HEK293 (cell line): ENCODE measurements at regions of chr17 and their contacts with region 1.

Region 1: GRCh38 chr17:44086364-44087311 is 16.1 kb downstream of the G6PC3 start:
- H3K4me3 ChIP-seq: no peak overlapping the region
- H3K27ac ChIP-seq: peak overlapping the region; percentile 25; the same call in 1 of the 2 replicates
- H3K4me1 ChIP-seq: peaks cover 10% of the 10 kb centered on the region
- CTCF ChIP-seq: no peak

Region 2: GRCh38 chr17:44070455-44071197 is 16.0 kb before region 1 on chr17 and contains the start of gene G6PC3:
- CTCF ChIA-PET with region 1: interaction called, 20 read pairs
- POLR2A ChIA-PET with region 1: interaction called, 13 read pairs
- H3K4me3 ChIP-seq: peak within 1 kb of the TSS; percentile 50
- H3K27ac ChIP-seq: peak within 1 kb of the TSS; percentile 97
- H3K4me1 ChIP-seq: peaks cover 12% of the 10 kb centered on the region
- CTCF ChIP-seq: peak; percentile 6

Region 3: DNA sequence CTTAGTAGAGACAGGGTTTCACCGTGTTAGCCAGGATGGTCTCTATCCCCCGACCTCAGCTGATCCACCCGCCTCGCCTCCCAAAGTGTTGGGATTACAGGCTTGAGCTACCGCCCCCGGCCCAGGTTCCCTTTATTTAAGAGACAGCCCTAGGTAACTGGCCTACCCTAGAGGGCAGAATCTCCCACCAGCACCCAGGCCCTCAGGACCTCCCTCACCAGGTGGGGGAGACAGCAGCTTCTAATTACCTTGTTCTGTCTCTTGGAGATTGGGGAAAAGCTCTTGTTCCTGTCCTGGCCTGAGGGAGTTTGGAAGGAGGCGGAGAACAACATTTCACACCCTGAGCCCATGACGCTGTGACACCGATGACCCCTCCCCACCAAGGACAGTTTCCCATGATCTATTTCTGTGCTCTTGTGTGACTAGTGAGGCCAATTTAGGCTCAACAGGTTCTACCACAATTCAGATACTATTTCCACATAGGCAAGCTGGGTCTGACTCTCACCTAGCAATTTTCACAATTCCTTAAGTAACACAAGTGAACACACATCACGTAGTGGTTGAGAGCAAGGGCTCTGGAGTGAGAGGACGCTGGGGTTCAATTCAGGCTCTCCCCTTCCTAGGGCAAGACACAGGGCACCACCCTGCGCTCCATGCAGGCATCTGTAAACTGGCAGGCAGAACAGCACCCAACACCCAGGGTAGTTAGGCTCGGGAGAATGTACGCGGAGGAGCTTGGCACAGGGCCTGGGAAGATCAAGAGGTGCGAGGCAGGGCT is 16.4 kb after region 1 on chr17:
- CTCF ChIA-PET with region 1: interaction called, 12 read pairs
- POLR2A ChIA-PET with region 1: interaction called, 7 read pairs
- H3K4me3 ChIP-seq: no peak overlapping the region
- H3K27ac ChIP-seq: no peak overlapping the region
- H3K4me1 ChIP-seq: no peaks in the 10 kb centered on the region; the same call in 1 of the 2 replicates
- CTCF ChIP-seq: peak; percentile 50; the same call in 1 of the 2 replicates

Region 4: DNA sequence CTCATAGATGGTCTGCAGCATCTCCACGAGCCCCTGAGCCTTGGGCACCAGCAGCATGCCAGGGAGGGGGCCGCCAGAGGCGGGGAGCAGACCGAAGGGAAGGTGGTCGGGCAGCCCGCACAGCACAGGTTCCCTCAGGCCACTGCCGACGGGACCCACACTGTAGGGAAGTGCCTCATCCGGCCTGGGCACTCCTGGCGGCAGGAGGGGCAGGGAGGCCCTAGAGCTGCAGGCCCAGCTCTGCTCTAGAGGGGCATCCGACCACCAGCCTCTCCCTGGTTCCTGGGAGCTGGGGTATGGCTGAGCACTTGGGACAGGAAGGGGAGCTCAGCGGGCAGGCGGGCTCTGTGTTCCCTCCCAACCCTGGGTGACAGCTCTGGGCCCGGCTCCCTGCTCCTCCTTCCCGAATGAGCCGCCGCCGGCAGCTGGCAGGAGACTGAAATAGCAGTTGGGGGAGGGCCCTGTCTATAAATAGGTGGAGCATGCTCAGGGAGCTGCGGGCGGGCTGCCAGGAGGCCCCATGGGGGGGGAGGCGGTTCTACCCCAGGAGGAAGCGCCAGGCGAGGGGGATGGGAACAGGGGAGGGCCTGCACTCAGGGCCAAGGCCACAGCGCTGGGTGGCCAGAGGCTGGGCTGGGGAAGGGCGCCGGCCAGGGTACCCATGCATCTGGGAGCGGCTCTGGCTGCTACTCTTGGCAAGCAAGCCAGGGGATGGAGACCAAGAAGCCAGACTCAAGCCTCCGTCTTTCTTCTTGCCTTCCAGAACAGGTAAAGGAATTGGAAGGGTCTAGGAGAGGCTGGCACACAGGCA is 24.4 kb after region 1 on chr17:
- CTCF ChIA-PET with region 1: interaction called, 98 read pairs
- POLR2A ChIA-PET with region 1: interaction called, 4 read pairs
- H3K4me3 ChIP-seq: no peak overlapping the region
- H3K27ac ChIP-seq: peak overlapping the region; percentile 54; the same call in 1 of the 2 replicates
- H3K4me1 ChIP-seq: peaks cover 24% of the 10 kb centered on the region
- CTCF ChIP-seq: no peak

Region 5: DNA sequence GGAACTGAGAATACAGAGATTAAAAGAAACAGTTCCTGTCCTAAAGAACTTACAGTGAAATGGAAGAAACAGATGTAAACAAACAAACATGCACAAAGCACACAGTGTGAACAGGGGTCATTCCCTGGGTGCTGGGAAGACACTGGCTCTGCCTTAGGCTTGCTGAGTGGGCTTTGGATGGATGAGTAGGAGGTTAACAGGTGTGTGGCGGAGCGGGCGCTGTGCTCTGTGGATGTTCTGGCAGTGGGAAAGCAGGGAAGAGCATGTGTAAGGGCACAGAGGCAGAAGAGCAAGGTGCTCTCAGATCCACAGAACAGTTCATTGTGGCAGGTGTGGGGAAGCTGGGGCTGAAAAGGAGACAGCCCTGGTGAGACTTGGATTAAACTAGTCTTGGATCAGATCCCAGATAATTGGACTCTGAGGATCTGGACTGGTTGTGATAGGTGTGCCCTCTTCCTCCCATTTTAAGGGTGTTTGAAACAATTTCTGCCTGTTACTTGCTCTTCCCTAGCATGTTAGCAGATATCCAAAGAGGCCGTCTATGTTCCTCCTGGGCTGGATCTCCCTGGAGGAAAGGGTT is 63.2 kb after region 1 on chr17:
- CTCF ChIA-PET with region 1: interaction called, 11 read pairs
- POLR2A ChIA-PET with region 1: interaction called, 4 read pairs
- H3K4me3 ChIP-seq: no peak overlapping the region
- H3K27ac ChIP-seq: peak overlapping the region; percentile 29
- H3K4me1 ChIP-seq: peaks cover 3% of the 10 kb centered on the region; the same call in 1 of the 2 replicates
- CTCF ChIP-seq: no peak